Motor neuron (in vitro differentiated cells): ENCODE measurements at regions of chr2 and their contacts with region 1.

Region 1: GRCh38 chr2:68467077-68467960 is at the starts of genes APLF and FBXO48:
- ATAC-seq: peak; percentile 88 to 96 (median 95)
- H3K4me3 ChIP-seq: peak within 1 kb of the TSS; percentile 66 to 95 (median 78)
- H3K27ac ChIP-seq: peak within 1 kb of the TSS; percentile 20 to 41
- H3K4me1 ChIP-seq: peaks cover 5 to 6% of the 10 kb centered on the region in 2 donors
- total RNA-seq, gene APLF: 1.8 to 3.9 (median 3.0) TPM
- total RNA-seq, gene FBXO48: 0.54 to 1.5 (median 0.82) TPM

Region 2: GRCh38 chr2:68807821-68808266 is 340.5 kb after region 1 on chr2:
- in situ Hi-C with region 1: no loop called
- ATAC-seq: peak in 2 of 8 experiments; percentile 19 to 34
- H3K4me3 ChIP-seq: no peak overlapping the region
- H3K27ac ChIP-seq: no peak overlapping the region
- H3K4me1 ChIP-seq: peaks cover 0 to 3% of the 10 kb centered on the region in 2 donors

Region 3: DNA sequence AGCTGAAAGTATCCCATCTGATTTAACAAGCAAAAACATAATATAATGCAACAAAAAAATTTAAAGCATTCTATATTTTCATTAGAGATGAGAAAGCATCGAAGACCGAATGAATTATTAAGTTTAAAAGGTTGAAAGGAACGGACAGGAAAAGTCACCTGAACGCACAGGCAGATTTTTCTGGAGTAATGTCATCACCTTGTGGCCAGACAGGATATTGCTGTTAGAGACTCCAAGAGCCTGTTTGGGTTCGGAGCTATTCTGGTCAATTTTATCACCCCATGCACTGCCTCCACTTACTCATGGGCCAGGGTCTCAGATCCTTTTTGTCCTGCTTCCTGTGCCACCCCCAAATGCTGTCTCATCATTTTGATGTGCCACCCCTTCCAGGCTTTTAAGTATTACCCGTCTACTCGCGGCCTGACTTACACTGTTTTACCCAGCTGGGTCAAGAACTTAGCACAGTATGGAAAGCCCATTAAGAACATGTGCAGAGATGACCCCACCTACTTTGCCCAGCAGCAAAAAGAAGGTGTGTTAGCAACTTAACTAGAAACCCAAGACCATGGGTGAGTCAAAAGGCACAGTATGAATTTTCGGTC is 458.1 kb after region 1 on chr2:
- in situ Hi-C with region 1: loop called in 3 of 9 experiments (anchors 10 kb)
- ATAC-seq: peak in 4 of 8 experiments; percentile 34 to 76 (median 60)
- H3K4me3 ChIP-seq: no peak overlapping the region
- H3K27ac ChIP-seq: no peak overlapping the region
- H3K4me1 ChIP-seq: no peaks in the 10 kb centered on the region